HepG2 (cell line): ENCODE measurements at regions of chr19 and their contacts with region 1.

Region 1: DNA sequence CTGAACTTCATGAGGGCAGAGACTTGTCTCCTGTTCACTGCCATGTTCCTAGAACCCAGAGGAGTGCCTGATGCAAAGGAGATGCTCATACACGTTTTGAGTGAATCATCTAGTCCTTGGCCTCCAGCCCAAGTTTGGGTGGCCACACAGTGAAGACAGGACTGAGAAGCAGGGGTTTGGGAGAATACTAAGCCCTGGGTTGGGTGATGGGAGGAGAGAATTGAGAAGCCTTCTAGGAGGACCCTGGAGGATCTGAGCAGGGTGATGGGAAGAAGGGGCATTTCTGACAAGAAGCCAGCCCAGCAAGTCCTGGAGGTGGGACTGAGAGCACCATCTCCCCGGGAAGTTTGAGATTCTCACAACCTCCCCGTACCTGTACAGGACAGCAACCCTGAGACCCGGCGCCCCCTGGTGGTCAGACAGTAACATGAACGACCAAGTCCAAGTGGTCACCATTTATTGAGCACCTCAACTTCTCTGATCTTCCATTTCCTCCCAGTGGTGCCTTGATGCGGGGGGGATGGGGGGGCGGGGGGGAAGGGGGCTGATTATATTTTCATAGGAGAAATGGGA is 11.0 kb downstream of the CTU1 start:
- DNase-seq: peak; percentile 34
- ATAC-seq: peak; percentile 76
- H3K4me3 ChIP-seq: no peak overlapping the region
- H3K27ac ChIP-seq: no peak overlapping the region
- H3K4me1 ChIP-seq: peaks cover 17% of the 10 kb centered on the region
- H3K27me3 ChIP-seq: no peaks in the 10 kb centered on the region; a peak in 1 of 5 replicates
- CTCF ChIP-seq: peak; percentile 70
- EP300 ChIP-seq: no peak
- POLR2A ChIP-seq: no peak
- RAD21 ChIP-seq: no peak

Region 2: DNA sequence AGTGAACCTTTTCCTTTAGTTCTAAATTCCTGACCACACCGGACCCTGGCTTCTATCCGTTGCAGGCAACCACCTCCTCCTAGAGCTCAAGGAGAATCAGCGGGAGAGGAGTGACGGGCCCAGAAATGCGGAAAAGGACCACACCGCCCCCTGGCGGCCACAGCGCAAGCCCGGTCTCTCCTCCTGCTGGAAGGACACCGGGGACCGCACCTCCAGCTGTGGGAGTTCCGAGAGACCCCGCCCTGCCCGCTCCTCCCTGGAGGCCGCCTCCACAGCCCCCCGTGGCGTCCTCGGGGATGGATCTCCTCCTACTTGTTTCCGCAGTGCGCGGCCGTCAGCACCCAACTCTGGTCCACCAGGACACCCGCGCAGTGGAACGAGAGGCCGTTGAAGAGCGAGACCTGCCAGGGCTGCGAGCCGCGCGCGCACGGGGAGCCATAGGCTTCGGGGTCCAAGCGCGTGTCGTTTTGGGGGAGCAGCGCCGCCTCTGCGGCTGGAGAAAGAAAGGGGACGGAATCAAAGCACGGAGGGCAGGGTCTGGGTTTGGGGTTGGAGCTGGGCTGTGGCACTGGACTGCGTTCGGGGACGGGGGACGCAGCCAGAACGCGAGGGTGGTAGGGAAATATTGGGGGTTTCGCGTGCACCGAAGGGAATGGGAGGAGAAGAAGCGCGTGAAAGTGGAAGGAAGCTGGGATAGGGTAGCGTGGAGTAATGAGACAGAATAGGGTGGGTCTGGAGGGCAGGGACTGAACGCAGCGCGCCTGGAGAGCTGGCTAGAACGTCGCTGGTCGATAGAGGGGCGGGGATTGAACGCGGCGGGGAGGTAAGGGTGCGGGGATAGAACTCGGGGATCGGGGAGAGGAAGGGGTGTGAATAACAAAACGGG is 80.2 kb before region 1 on chr19:
- CTCF ChIA-PET with region 1: interaction called, 16 read pairs
- POLR2A ChIA-PET with region 1: no interaction called
- in situ Hi-C with region 1: loop called (anchors 5 kb)
- intact Hi-C with region 1: loop called (anchors 1 kb)
- DNase-seq: peak; percentile 31
- ATAC-seq: peak; percentile 79
- H3K4me3 ChIP-seq: peak overlapping the region in 1 of 3 experiments; percentile 16; a peak in 1 of 6 replicates
- H3K27ac ChIP-seq: no peak overlapping the region
- H3K4me1 ChIP-seq: 0 out of 2 replicates have a peak, but pooled peaks cover 4% of the 10 kb centered on the region
- H3K27me3 ChIP-seq: peaks cover 3 to 31% of the 10 kb centered on the region in 2 experiments; a peak in 4 of 5 replicates
- CTCF ChIP-seq: peak; percentile 87
- EP300 ChIP-seq: no peak
- POLR2A ChIP-seq: no peak
- RAD21 ChIP-seq: peak; percentile 53; the same call in 1 of the 2 replicates

Region 3: GRCh38 chr19:51029718-51030117 is 67.5 kb before region 1 on chr19:
- CTCF ChIA-PET with region 1: no interaction called
- POLR2A ChIA-PET with region 1: no interaction called
- in situ Hi-C with region 1: no loop called
- intact Hi-C with region 1: no loop called
- DNase-seq: no peak
- ATAC-seq: no peak
- H3K4me3 ChIP-seq: no peak overlapping the region
- H3K27ac ChIP-seq: no peak overlapping the region
- H3K4me1 ChIP-seq: no peaks in the 10 kb centered on the region
- H3K27me3 ChIP-seq: peaks cover 11 to 43% of the 10 kb centered on the region in 2 experiments; a peak in 4 of 5 replicates
- CTCF ChIP-seq: no peak
- EP300 ChIP-seq: no peak
- POLR2A ChIP-seq: no peak
- RAD21 ChIP-seq: no peak

Region 4: DNA sequence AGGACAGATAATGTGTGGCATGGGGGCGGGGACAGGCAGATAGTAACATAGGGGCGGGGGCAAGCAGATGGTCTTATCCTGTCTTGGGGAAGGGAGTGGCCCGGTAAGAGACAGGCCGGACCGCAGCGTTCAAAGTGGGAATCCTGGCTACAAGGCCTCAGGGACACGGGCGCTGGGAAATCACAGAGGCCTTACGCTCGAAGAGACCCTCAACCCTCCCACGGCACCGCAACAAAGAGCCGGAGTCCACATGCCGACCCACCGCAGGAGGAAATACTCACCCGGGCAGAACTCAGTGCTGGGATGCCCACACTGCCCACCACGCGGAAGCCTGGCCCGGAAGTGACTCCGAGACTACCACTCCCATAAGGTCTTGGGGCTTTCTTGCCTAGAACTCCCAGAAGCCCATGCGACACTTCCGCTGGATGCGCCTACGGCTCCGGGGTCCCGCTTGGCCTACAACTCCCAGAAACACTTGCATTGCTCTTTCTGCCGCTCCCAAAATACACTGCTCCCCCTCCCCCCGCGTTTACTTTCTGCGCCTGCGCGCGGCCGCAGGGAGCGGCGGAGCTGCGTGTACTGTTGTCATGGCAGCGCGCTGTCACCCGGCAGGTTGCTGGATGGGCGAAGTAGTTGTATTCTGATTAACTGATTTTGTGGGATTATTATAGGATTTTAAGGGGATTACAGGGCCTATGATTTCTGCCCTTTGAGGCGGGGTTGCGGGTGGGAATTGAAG is 11.0 kb after region 1 on chr19 and contains the start of gene CTU1:
- CTCF ChIA-PET with region 1: no interaction called
- POLR2A ChIA-PET with region 1: no interaction called
- in situ Hi-C with region 1: no loop called
- intact Hi-C with region 1: no loop called
- DNase-seq: peak; percentile 98
- ATAC-seq: peak; percentile 98
- H3K4me3 ChIP-seq: peak within 1 kb of the TSS; percentile 66 to 91 (median 90)
- H3K27ac ChIP-seq: peak within 1 kb of the TSS; percentile 52
- H3K4me1 ChIP-seq: peaks cover 15% of the 10 kb centered on the region
- H3K27me3 ChIP-seq: peaks cover 0 to 9% of the 10 kb centered on the region in 2 experiments; a peak in 1 of 5 replicates
- CTCF ChIP-seq: no peak
- EP300 ChIP-seq: no peak; a peak in 1 of 4 replicates
- POLR2A ChIP-seq: peak; percentile 80 to 86
- RAD21 ChIP-seq: no peak
- total RNA-seq, gene CTU1: 1.9 and 2.9 TPM in 2 replicates

Region 5: DNA sequence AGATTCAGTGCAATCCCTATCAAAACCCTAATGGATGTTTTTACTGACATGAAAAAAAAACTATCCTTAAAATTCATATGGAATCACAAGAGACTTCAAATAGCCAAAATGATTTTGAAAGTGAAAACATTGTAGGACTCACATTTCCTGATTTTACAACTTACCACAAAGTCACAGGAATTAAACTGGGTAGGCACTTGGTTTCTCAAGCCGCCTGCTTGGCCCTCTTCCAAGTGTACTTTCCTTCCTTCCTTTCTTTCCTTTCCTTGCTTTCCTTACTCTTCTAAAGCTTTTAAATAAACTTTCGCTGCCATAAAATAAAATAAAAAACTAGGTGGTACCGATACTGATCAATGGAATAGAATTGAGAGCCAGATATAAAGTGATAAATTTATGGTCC is 106.7 kb after region 1 on chr19:
- CTCF ChIA-PET with region 1: no interaction called
- POLR2A ChIA-PET with region 1: no interaction called
- in situ Hi-C with region 1: no loop called
- intact Hi-C with region 1: no loop called
- DNase-seq: no peak
- ATAC-seq: no peak
- H3K4me3 ChIP-seq: no peak overlapping the region
- H3K27ac ChIP-seq: no peak overlapping the region
- H3K4me1 ChIP-seq: no peaks in the 10 kb centered on the region
- H3K27me3 ChIP-seq: peaks cover 0 to 14% of the 10 kb centered on the region in 2 experiments; a peak in 2 of 5 replicates
- CTCF ChIP-seq: no peak
- EP300 ChIP-seq: no peak
- POLR2A ChIP-seq: no peak
- RAD21 ChIP-seq: no peak